Endothelial cell of umbilical vein (primary cell): ENCODE measurements at regions of chr1 and their contacts with region 1.

Region 1: DNA sequence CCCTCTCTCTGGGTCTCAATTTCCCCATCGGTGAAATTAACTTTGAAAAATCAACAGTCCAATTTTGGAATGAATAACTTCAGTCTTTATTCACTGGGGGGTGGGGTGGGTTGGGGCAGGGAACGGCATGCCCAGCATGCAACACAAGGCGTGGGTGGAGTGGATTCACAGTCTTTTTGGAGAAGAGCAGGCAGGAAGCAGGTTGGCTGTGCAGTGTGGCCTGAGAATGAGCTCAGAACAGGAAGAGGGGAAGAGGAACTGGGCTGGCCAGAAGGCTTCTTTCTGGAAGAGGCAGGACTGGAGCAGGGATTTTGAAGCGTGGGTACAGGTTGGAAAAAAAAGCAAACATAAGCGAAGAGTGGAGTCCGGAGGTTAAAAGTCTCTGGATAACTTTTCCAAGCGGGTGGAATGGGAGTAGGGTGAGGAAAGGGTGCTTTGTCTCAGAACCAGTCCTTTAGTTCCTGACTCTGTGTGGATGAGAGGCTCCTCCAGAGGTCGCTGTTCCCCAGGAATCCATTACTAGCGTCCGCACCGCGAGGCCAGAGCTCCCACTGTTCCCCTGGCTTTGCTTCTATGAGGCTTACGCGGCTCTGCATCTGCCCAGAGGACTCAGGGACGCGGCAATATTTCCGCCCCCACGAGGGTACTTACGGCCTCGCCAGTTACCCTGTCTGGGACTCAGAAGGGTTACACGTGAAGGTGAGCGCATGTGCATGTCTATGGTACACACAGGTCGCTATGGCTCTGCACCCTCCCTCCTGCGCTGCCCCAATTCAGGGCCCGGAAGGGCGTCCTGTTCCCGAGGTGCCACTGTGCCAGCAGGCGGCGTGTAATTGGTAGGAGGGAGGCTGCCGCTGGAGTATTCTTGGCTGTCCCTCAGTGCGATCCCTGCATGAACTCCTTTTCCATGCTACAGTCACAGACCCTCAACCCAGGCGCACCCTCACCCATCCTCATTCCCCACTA is 5.5 kb upstream of the FOXD2 start:
- DNase-seq: peak; percentile 80
- H3K4me3 ChIP-seq: no peak overlapping the region
- H3K27ac ChIP-seq: no peak overlapping the region
- H3K4me1 ChIP-seq: peaks cover 24% of the 10 kb centered on the region
- H3K27me3 ChIP-seq: peaks cover 10 to 18% of the 10 kb centered on the region in 2 experiments
- CTCF ChIP-seq: peak; percentile 80 to 83
- POLR2A ChIP-seq: no peak

Region 2: GRCh38 chr1:47388891-47389238 is 43.5 kb before region 1 on chr1:
- CTCF ChIA-PET with region 1: interaction called, 21 read pairs
- POLR2A ChIA-PET with region 1: no interaction called
- dilution Hi-C with region 1: no loop called
- intact Hi-C with region 1: loop called (anchors 2 kb)
- DNase-seq: peak; percentile 68
- H3K4me3 ChIP-seq: no peak overlapping the region
- H3K27ac ChIP-seq: no peak overlapping the region
- H3K4me1 ChIP-seq: no peaks in the 10 kb centered on the region
- H3K27me3 ChIP-seq: peaks cover 0 to 2% of the 10 kb centered on the region in 2 experiments
- CTCF ChIP-seq: peak; percentile 66 to 84
- POLR2A ChIP-seq: no peak

Region 3: GRCh38 chr1:47416319-47417169 is 15.8 kb before region 1 on chr1:
- CTCF ChIA-PET with region 1: interaction called, 15 read pairs
- POLR2A ChIA-PET with region 1: no interaction called
- dilution Hi-C with region 1: no loop called
- intact Hi-C with region 1: no loop called
- DNase-seq: peak; percentile 6
- H3K4me3 ChIP-seq: no peak overlapping the region
- H3K27ac ChIP-seq: no peak overlapping the region
- H3K4me1 ChIP-seq: no peaks in the 10 kb centered on the region
- H3K27me3 ChIP-seq: peaks cover 40 to 57% of the 10 kb centered on the region in 2 experiments
- CTCF ChIP-seq: no peak
- POLR2A ChIP-seq: no peak

Region 4: GRCh38 chr1:47669081-47669585 is 236.8 kb after region 1 on chr1:
- CTCF ChIA-PET with region 1: no interaction called
- POLR2A ChIA-PET with region 1: no interaction called
- dilution Hi-C with region 1: no loop called
- intact Hi-C with region 1: no loop called
- DNase-seq: no peak
- H3K4me3 ChIP-seq: no peak overlapping the region
- H3K27ac ChIP-seq: no peak overlapping the region
- H3K4me1 ChIP-seq: no peaks in the 10 kb centered on the region
- H3K27me3 ChIP-seq: peaks cover 0 to 3% of the 10 kb centered on the region in 2 experiments
- CTCF ChIP-seq: no peak
- POLR2A ChIP-seq: no peak

Region 5: GRCh38 chr1:47755101-47755990 is 323.0 kb after region 1 on chr1:
- CTCF ChIA-PET with region 1: interaction called, 4 read pairs
- POLR2A ChIA-PET with region 1: no interaction called
- dilution Hi-C with region 1: no loop called
- intact Hi-C with region 1: loop called (anchors 1 kb)
- DNase-seq: no peak
- H3K4me3 ChIP-seq: no peak overlapping the region
- H3K27ac ChIP-seq: no peak overlapping the region
- H3K4me1 ChIP-seq: no peaks in the 10 kb centered on the region
- H3K27me3 ChIP-seq: no peaks in the 10 kb centered on the region
- CTCF ChIP-seq: peak; percentile 41 to 50
- POLR2A ChIP-seq: no peak